ENCODE measurements at regions of chr11 and their contacts with region 1.

Region 1: DNA sequence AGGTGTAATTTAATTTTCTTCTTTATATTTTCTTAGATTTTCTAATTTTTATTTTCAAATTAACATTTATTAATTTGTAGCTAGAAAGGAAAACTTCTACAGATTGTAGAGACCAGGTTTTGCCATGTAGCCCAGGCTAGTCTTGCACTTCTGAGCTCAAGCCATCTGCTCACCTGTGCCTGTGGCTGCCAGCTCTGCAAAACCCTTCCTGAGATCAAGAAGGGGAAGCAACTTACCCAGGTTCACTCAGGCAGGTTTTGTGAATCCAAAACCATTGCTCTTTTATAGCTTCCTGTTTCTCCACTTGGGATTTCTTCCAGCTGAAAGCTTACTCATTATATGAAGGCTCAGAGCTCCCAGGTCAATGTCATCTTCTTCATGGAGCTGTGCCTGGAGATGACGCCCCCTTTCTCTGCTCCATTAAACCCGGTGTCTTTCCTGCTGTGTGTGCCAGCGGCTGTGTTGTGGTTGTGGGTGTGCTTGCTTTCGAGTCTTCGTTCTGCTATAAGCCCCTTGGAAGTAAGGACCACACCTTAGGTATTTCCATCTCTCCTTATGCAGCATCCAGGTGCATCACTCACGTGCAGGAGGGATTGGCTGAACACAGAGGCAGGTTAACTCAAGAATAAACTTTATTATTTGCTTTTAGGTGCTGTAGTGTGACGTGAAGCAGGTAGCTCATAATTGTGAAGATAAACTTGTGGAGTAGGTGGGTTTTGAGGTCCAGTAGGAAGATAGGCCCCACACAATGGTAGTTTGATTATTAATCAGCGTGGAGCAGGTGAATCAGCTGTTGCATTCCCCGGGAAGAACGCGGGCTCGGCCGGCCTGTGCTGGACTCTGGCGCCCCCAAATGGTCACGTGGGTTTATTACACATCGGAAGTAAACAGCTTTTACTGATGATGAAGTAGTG is 42.2 kb upstream of the INCENP start:
- DNase-seq: peak; percentile 73
- H3K27ac ChIP-seq: 0 out of 2 replicates have a peak overlapping the region, but pooled peaks have one; percentile 10
- CTCF ChIP-seq: peak; percentile 88

Region 2: GRCh38 chr11:61747192-61747966 is 334.3 kb before region 1 on chr11:
- CTCF ChIA-PET with region 1: interaction called, 17 read pairs
- POLR2A ChIA-PET with region 1: no interaction called
- DNase-seq: peak; percentile 48
- H3K27ac ChIP-seq: no peak overlapping the region
- CTCF ChIP-seq: peak; percentile 88

Region 3: GRCh38 chr11:61871158-61871597 is 210.5 kb before region 1 on chr11:
- CTCF ChIA-PET with region 1: interaction called, 38 read pairs
- POLR2A ChIA-PET with region 1: no interaction called
- DNase-seq: peak; percentile 87
- H3K27ac ChIP-seq: peak overlapping the region; percentile 71
- CTCF ChIP-seq: peak; percentile 93

Region 4: GRCh38 chr11:61908730-61909315 is 172.8 kb before region 1 on chr11:
- CTCF ChIA-PET with region 1: interaction called, 21 read pairs
- POLR2A ChIA-PET with region 1: no interaction called
- DNase-seq: no peak
- H3K27ac ChIP-seq: no peak overlapping the region
- CTCF ChIP-seq: no peak

Region 5: GRCh38 chr11:62061351-62062222 is 20.0 kb before region 1 on chr11:
- CTCF ChIA-PET with region 1: interaction called, 13 read pairs
- POLR2A ChIA-PET with region 1: no interaction called
- DNase-seq: peak; percentile 32
- H3K27ac ChIP-seq: no peak overlapping the region
- CTCF ChIP-seq: peak; percentile 26

Region 6: DNA sequence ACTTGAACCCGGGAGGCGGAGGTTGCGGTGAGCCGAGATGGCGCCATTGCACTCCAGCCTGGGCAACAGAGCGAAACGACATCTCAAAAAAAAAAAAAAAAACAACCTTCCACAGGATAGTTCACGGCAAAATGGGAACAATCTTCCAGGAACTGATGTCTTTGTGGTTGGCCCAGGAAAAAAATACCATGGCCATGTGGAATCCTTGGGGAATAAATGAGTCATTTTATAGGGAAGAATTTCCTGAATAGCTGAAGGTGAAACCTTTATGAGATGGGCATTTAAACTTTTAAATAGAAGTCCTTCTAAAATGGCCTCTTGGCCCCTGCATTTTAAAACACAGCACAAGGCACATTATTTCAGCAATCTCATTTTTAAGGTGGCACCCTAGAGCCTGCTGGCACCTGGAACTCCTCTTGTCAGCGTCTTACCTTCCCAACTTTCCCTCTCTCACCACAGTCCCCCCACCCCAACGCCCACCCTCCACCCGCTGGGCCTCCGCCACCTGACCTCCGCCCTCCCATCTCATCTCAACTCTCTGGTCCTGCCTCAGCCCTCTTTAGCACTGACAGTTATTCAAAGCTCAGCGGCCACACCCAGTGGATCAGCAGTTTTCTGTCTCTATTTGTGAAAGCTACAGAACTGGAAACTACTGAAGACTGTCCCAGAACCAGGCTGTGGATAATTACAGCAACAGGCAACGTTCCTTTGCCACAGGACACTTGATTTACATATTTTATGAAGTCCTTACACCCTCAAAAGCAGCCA is 380.3 kb after region 1 on chr11:
- CTCF ChIA-PET with region 1: no interaction called
- POLR2A ChIA-PET with region 1: no interaction called
- DNase-seq: no peak
- H3K27ac ChIP-seq: peak overlapping the region; percentile 41; the same call in 1 of the 2 replicates
- CTCF ChIP-seq: no peak

Measured in RWPE1 (cell line).